WTC11 (cell line): ENCODE measurements at regions of chr14 and their contacts with region 1.

Region 1: GRCh38 chr14:21748869-21749303 is 75.3 kb upstream of the OR4E1 start:
- DNase-seq: peak; percentile 69
- ATAC-seq: peak; percentile 94
- H3K4me3 Mint-ChIP-seq: no peak overlapping the region
- H3K27ac Mint-ChIP-seq: no peak overlapping the region
- H3K4me1 Mint-ChIP-seq: no peaks in the 10 kb centered on the region
- H3K27me3 Mint-ChIP-seq: no peaks in the 10 kb centered on the region; the same call in 1 of the 2 replicates
- CTCF ChIP-seq: 0 out of 2 replicates have a peak, but pooled peaks have one; percentile 48

Region 2: DNA sequence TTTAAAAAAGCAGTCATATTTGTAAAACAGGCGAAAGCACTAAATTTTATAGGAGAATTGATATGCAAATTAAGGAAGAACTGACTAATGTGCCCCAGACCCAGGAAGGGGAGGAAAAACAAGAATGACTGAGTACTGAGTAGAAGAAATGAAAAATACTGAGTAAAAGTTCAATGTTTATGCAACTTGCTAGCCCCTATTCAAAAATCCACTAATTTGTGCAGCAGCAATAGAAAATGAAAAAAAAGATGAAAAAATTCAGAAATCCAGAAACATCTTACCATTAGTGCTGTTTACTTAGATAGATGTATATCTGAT is 299.0 kb before region 1 on chr14:
- CTCF ChIA-PET with region 1: no interaction called
- POLR2A ChIA-PET with region 1: no interaction called
- DNase-seq: no peak
- ATAC-seq: no peak
- H3K4me3 Mint-ChIP-seq: no peak overlapping the region
- H3K27ac Mint-ChIP-seq: 0 out of 2 replicates have a peak overlapping the region, but pooled peaks have one; percentile 65
- H3K4me1 Mint-ChIP-seq: peaks cover 28% of the 10 kb centered on the region
- H3K27me3 Mint-ChIP-seq: no peaks in the 10 kb centered on the region
- CTCF ChIP-seq: no peak

Region 3: GRCh38 chr14:21734457-21735074 is 14.3 kb before region 1 on chr14:
- CTCF ChIA-PET with region 1: interaction called, 10 read pairs
- POLR2A ChIA-PET with region 1: no interaction called
- DNase-seq: no peak
- ATAC-seq: no peak
- H3K4me3 Mint-ChIP-seq: no peak overlapping the region
- H3K27ac Mint-ChIP-seq: no peak overlapping the region
- H3K4me1 Mint-ChIP-seq: peaks cover 10% of the 10 kb centered on the region
- H3K27me3 Mint-ChIP-seq: peaks cover 10% of the 10 kb centered on the region
- CTCF ChIP-seq: peak; percentile 74

Region 4: GRCh38 chr14:21791749-21792148 is 42.9 kb after region 1 on chr14:
- CTCF ChIA-PET with region 1: interaction called, 16 read pairs
- POLR2A ChIA-PET with region 1: no interaction called
- DNase-seq: no peak
- ATAC-seq: no peak
- H3K4me3 Mint-ChIP-seq: no peak overlapping the region
- H3K27ac Mint-ChIP-seq: no peak overlapping the region
- H3K4me1 Mint-ChIP-seq: peaks cover 6% of the 10 kb centered on the region
- H3K27me3 Mint-ChIP-seq: peaks cover 95% of the 10 kb centered on the region
- CTCF ChIP-seq: no peak

Region 5: GRCh38 chr14:21852061-21852664 is 103.3 kb after region 1 on chr14:
- CTCF ChIA-PET with region 1: interaction called, 20 read pairs
- POLR2A ChIA-PET with region 1: no interaction called
- DNase-seq: peak; percentile 77
- ATAC-seq: peak; percentile 83
- H3K4me3 Mint-ChIP-seq: no peak overlapping the region
- H3K27ac Mint-ChIP-seq: no peak overlapping the region
- H3K4me1 Mint-ChIP-seq: no peaks in the 10 kb centered on the region
- H3K27me3 Mint-ChIP-seq: peaks cover 20% of the 10 kb centered on the region
- CTCF ChIP-seq: peak; percentile 30